Psoas muscle (tissue), 8 donors: ENCODE measurements at regions of chr9 and their contacts with region 1.

Region 1: GRCh38 chr9:94933429-94933828 is 206.9 kb downstream of the AOPEP start:
- DNase-seq: no peak
- ATAC-seq: no peak
- H3K4me3 ChIP-seq: no peak overlapping the region
- H3K27ac ChIP-seq: peak overlapping the region; percentile 36
- H3K4me1 ChIP-seq: peaks cover 20% of the 10 kb centered on the region
- H3K27me3 ChIP-seq: no peaks in the 10 kb centered on the region
- CTCF ChIP-seq: no peak

Region 2: GRCh38 chr9:94967482-94967881 is 34.1 kb after region 1 on chr9:
- intact Hi-C with region 1: loop called in 1 of 2 experiments (anchors 5 kb)
- DNase-seq: no peak
- ATAC-seq: no peak
- H3K4me3 ChIP-seq: no peak overlapping the region
- H3K27ac ChIP-seq: no peak overlapping the region
- H3K4me1 ChIP-seq: no peaks in the 10 kb centered on the region
- H3K27me3 ChIP-seq: no peaks in the 10 kb centered on the region
- CTCF ChIP-seq: no peak